ENCODE measurements at regions of chr4 and their contacts with region 1.

Region 1: DNA sequence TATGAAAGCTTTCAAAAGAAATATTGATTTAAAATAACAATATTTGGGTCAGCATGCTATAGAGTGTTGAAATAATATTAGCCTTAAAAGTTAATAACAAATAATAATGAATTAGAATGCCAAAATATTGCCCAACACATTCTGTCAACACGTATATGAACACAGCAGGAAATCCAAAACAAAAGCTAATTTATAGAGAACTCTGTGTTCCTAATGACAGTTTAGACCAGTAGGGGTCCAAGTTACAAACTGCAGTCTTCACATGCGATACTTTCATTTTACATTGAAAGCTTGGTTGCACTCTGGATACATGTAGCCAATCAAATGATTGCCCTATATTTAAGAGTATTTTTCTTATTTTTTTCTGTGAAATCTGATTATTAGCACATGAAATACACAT is 274.4 kb downstream of the DCTD start:
- DNase-seq: no peak
- ATAC-seq: no peak
- H3K4me3 ChIP-seq: no peak overlapping the region
- H3K27ac ChIP-seq: no peak overlapping the region
- H3K4me1 ChIP-seq: peaks cover 0 to 17% (median 6%) of the 10 kb centered on the region in 9 donors
- H3K27me3 ChIP-seq: no peaks in the 10 kb centered on the region
- CTCF ChIP-seq: peak in 2 of 9 donors; percentile 6 to 11

Region 2: GRCh38 chr4:182680234-182680653 is 37.4 kb after region 1 on chr4:
- intact Hi-C with region 1: loop called in 1 of 10 experiments (anchors 5 kb)
- DNase-seq: peak; percentile 37 to 56
- ATAC-seq: peak; percentile 72 to 95 (median 90)
- H3K4me3 ChIP-seq: peak overlapping the region in 4 of 10 donors; percentile 16 to 23 (median 22)
- H3K27ac ChIP-seq: peak overlapping the region in 3 of 10 donors; percentile 12 to 45 (median 32)
- H3K4me1 ChIP-seq: peaks cover 0 to 18% (median 5%) of the 10 kb centered on the region in 9 donors
- H3K27me3 ChIP-seq: no peaks in the 10 kb centered on the region
- CTCF ChIP-seq: no peak

Region 3: GRCh38 chr4:182928061-182928460 is 285.2 kb after region 1 on chr4:
- intact Hi-C with region 1: no loop called
- DNase-seq: no peak
- ATAC-seq: no peak
- H3K4me3 ChIP-seq: no peak overlapping the region
- H3K27ac ChIP-seq: no peak overlapping the region
- H3K4me1 ChIP-seq: no peaks in the 10 kb centered on the region
- H3K27me3 ChIP-seq: peaks cover 0 to 8% (median 4%) of the 10 kb centered on the region in 7 donors
- CTCF ChIP-seq: peak in 1 of 9 donors; percentile 29